HepG2 (cell line): ENCODE measurements at regions of chr5 and their contacts with region 1.

Region 1: GRCh38 chr5:72816311-72817145 is at the start of gene TNPO1:
- DNase-seq: peak; percentile 77
- ATAC-seq: peak; percentile 94
- H3K4me3 ChIP-seq: peak within 1 kb of the TSS; percentile 85 to 87 (median 87)
- H3K27ac ChIP-seq: peak within 1 kb of the TSS; percentile 65
- H3K4me1 ChIP-seq: peaks cover 22% of the 10 kb centered on the region
- H3K27me3 ChIP-seq: peaks cover 0 to 2% of the 10 kb centered on the region in 2 experiments; a peak in 1 of 5 replicates
- CTCF ChIP-seq: no peak
- EP300 ChIP-seq: no peak
- POLR2A ChIP-seq: peak in 1 of 2 experiments; percentile 85; a peak in 3 of 4 replicates
- RAD21 ChIP-seq: peak; percentile 45
- total RNA-seq, gene TNPO1: 123 and 199 TPM in 2 replicates

Region 2: DNA sequence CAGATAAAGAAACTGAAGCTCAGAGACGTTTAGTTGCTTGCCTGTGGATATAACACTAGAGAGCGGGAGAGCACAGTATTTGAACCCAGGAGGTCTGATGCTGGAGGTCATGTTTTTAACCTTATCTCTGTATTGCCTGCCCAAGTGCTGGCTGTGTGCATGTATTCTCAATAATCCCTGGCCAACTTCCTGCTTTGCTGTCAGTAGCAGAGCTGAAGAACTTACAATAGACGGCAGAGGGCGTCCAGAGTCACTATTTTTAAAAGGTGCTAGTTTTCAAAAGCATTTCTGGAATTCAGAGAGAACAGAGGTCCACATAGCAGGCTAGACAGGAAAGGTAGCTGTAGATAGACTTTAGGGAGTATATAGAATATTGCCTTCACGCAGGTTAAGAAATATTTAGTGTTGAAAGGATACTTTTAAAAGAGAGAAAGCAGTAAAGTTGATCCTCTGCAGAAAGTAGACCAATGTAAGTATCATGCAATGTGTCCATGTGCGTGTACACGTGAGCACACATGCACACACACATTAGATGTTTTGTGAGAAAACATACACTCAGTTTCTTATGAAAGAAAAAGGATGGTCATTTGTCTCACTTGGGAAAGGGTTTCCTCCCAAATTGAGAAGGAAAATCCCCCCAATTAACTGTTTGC is 450.1 kb before region 1 on chr5:
- CTCF ChIA-PET with region 1: no interaction called
- POLR2A ChIA-PET with region 1: no interaction called
- in situ Hi-C with region 1: loop called (anchors 10 kb)
- intact Hi-C with region 1: loop called (anchors 1 kb)
- DNase-seq: peak; percentile 67
- ATAC-seq: peak; percentile 97
- H3K4me3 ChIP-seq: no peak overlapping the region
- H3K27ac ChIP-seq: no peak overlapping the region
- H3K4me1 ChIP-seq: peaks cover 6% of the 10 kb centered on the region; the same call in 1 of the 2 replicates
- H3K27me3 ChIP-seq: no peaks in the 10 kb centered on the region
- CTCF ChIP-seq: peak; percentile 77
- EP300 ChIP-seq: no peak
- POLR2A ChIP-seq: no peak
- RAD21 ChIP-seq: peak; percentile 57

Region 3: GRCh38 chr5:72436796-72437471 is 379.6 kb before region 1 on chr5:
- CTCF ChIA-PET with region 1: no interaction called
- POLR2A ChIA-PET with region 1: no interaction called
- in situ Hi-C with region 1: no loop called
- intact Hi-C with region 1: no loop called
- DNase-seq: no peak
- ATAC-seq: no peak
- H3K4me3 ChIP-seq: no peak overlapping the region
- H3K27ac ChIP-seq: no peak overlapping the region
- H3K4me1 ChIP-seq: no peaks in the 10 kb centered on the region
- H3K27me3 ChIP-seq: peaks cover 0 to 11% of the 10 kb centered on the region in 2 experiments; a peak in 1 of 5 replicates
- CTCF ChIP-seq: no peak
- EP300 ChIP-seq: no peak
- POLR2A ChIP-seq: no peak
- RAD21 ChIP-seq: no peak

Region 4: DNA sequence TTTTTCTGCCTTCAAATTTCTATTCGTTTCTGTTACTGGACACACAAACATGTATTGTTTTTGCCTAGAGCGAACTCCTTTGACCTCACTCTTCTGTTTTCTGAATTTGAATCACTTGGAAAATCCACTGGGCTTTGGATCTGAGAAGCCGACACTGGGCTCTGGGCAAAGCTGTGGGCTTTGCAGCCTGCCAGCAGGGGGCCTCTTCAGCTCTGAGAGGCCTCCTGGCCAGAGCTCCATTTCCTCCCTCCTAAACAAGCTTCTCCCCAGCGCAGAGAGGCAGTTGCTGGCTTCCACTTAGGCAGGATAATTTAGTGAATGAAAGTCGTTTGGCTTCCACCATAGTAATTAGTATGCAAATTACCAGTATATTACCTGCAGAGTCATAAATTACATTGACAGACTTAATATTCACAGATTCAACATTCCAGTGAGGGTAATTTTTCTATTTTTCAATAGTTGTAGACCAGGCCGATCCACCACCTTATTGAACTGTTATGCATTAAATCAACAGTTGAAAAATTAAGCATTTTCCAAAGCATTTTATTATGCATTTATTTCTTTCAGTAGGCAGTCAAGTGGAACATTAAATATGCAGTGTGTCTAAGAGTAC is 205.3 kb before region 1 on chr5:
- CTCF ChIA-PET with region 1: interaction called, 9 read pairs
- POLR2A ChIA-PET with region 1: interaction called, 3 read pairs
- in situ Hi-C with region 1: loop called (anchors 5 kb)
- intact Hi-C with region 1: loop called (anchors 1 kb)
- DNase-seq: peak; percentile 43
- ATAC-seq: peak; percentile 98
- H3K4me3 ChIP-seq: no peak overlapping the region
- H3K27ac ChIP-seq: no peak overlapping the region
- H3K4me1 ChIP-seq: no peaks in the 10 kb centered on the region
- H3K27me3 ChIP-seq: no peaks in the 10 kb centered on the region
- CTCF ChIP-seq: peak; percentile 81
- EP300 ChIP-seq: no peak
- POLR2A ChIP-seq: no peak
- RAD21 ChIP-seq: peak; percentile 62; the same call in 1 of the 2 replicates

Region 5: GRCh38 chr5:72711351-72711750 is 105.2 kb before region 1 on chr5:
- CTCF ChIA-PET with region 1: no interaction called
- POLR2A ChIA-PET with region 1: no interaction called
- in situ Hi-C with region 1: no loop called
- intact Hi-C with region 1: no loop called
- DNase-seq: no peak
- ATAC-seq: no peak
- H3K4me3 ChIP-seq: no peak overlapping the region
- H3K27ac ChIP-seq: no peak overlapping the region
- H3K4me1 ChIP-seq: no peaks in the 10 kb centered on the region
- H3K27me3 ChIP-seq: peaks cover 2 to 6% of the 10 kb centered on the region in 2 experiments; a peak in 4 of 5 replicates
- CTCF ChIP-seq: no peak
- EP300 ChIP-seq: no peak
- POLR2A ChIP-seq: no peak
- RAD21 ChIP-seq: no peak

Region 6: GRCh38 chr5:72767289-72767998 is 49.1 kb before region 1 on chr5:
- CTCF ChIA-PET with region 1: no interaction called
- POLR2A ChIA-PET with region 1: no interaction called
- in situ Hi-C with region 1: no loop called
- intact Hi-C with region 1: loop called (anchors 1 kb)
- DNase-seq: peak; percentile 86
- ATAC-seq: peak; percentile 100
- H3K4me3 ChIP-seq: no peak overlapping the region
- H3K27ac ChIP-seq: no peak overlapping the region
- H3K4me1 ChIP-seq: peaks cover 12% of the 10 kb centered on the region
- H3K27me3 ChIP-seq: no peaks in the 10 kb centered on the region; a peak in 1 of 5 replicates
- CTCF ChIP-seq: 0 out of 2 replicates have a peak, but pooled peaks have one; percentile 25
- EP300 ChIP-seq: no peak
- POLR2A ChIP-seq: no peak
- RAD21 ChIP-seq: no peak

Region 7: GRCh38 chr5:72847989-72848473 is 31.5 kb after region 1 on chr5:
- CTCF ChIA-PET with region 1: no interaction called
- POLR2A ChIA-PET with region 1: interaction called, 5 read pairs
- in situ Hi-C with region 1: no loop called
- intact Hi-C with region 1: loop called (anchors 1 kb)
- DNase-seq: peak; percentile 73
- ATAC-seq: peak; percentile 93
- H3K4me3 ChIP-seq: peak overlapping the region; percentile 84 to 99 (median 93)
- H3K27ac ChIP-seq: peak overlapping the region; percentile 96
- H3K4me1 ChIP-seq: peaks cover 38% of the 10 kb centered on the region
- H3K27me3 ChIP-seq: no peaks in the 10 kb centered on the region; a peak in 1 of 5 replicates
- CTCF ChIP-seq: no peak
- EP300 ChIP-seq: 0 out of 4 replicates have a peak, but pooled peaks of 1 of the 2 experiments have one; percentile 20
- POLR2A ChIP-seq: peak; percentile 95 to 96
- RAD21 ChIP-seq: 0 out of 2 replicates have a peak, but pooled peaks have one; percentile 13